ENCODE measurements at regions of chr14 and their contacts with region 1.

Region 1: DNA sequence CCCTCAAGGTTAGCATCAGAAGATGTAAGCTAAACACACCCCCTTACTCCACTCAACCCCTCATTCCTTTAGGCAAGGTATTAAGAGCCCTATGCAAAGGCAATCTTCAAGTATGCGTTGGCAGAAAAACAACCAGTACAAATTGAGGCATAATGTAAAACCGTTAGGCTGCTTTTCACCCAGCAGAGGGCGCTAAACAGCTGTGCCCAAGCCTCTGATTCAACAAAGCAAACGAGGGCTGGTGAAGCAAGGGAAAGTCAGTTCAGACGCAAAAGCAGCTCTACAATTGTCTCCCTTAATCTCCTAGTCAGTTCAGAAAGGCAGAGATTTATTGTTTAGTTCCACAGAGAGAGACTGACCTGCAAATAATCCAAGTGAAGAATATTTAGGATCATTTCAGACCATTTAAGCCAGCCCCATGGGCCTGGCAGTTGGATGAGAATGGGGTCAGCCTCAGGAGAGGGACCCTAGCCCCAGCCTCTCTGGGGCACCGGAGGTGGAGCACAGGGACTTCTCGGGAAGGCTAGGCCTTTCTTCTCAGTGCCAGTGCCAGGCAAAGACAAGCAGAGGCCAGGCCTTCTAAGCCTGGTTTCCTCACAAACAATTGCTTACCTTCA is 23.5 kb downstream of the DCAF5 start:
- DNase-seq: peak; percentile 28 to 82 (median 72)
- ATAC-seq: peak; percentile 95
- H3K4me3 ChIP-seq: no peak overlapping the region
- H3K4me3 Mint-ChIP-seq: peak overlapping the region in 8 of 10 donors; percentile 2 to 37 (median 23)
- H3K27ac ChIP-seq: peak overlapping the region; percentile 27
- H3K27ac Mint-ChIP-seq: peak overlapping the region in 8 of 9 donors; percentile 44 to 91 (median 82)
- H3K4me1 ChIP-seq: peaks cover 16 to 33% of the 10 kb centered on the region in 2 donors
- H3K4me1 Mint-ChIP-seq: peaks cover 36 to 94% (median 90%) of the 10 kb centered on the region in 7 donors
- H3K27me3 ChIP-seq: no peaks in the 10 kb centered on the region
- H3K27me3 Mint-ChIP-seq: no peaks in the 10 kb centered on the region

Region 2: DNA sequence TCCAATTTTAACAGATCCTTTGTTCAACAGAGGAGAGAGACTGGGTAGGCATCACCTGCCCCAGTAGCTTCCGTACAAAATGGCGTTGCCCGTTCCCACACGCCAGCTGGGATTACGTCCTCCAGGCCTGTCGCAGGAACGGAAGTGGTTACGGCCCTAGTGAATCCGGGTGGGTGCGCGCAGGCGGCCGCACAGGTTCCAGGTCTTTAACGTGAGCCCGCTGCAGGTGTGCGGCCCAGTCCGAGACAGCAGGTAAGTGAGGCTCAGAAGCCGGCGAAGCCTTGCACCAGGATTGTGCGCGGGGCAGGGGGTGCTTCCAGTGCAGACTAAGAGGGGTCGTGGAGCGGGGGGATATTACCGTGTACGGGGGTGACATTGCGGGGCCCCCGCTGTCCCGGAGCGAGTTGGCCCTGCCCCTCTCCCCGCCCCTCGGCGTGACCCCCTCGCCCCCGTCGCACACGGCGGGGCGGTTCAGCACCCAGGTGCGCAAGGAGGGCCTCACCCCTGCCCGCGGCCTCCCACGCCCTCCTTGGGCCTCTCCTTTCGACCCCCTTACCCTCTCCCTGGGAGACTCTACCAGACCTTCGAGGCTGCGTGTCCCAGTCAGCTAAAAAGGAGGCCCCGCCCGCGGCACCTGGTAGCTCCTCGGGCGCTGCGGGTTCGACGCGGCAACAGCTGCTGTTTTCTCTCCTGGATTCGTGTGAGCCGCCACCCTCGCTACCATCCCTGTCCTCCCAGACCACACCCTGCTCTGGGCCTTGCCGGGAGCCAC is 62.2 kb after region 1 on chr14 and contains the start of gene EXD2:
- CTCF ChIA-PET with region 1: interaction called, 4 read pairs
- POLR2A ChIA-PET with region 1: interaction called, 5 read pairs
- intact Hi-C with region 1: loop called (anchors 1 to 2 kb)
- DNase-seq: peak; percentile 27 to 68 (median 61)
- ATAC-seq: peak; percentile 81
- H3K4me3 ChIP-seq: peak within 1 kb of the TSS; percentile 71
- H3K4me3 Mint-ChIP-seq: peak within 1 kb of the TSS; percentile 91 to 97 (median 94)
- H3K27ac ChIP-seq: peak within 1 kb of the TSS; percentile 70
- H3K27ac Mint-ChIP-seq: peak within 1 kb of the TSS; percentile 80 to 96 (median 92)
- H3K4me1 ChIP-seq: peaks cover 0 to 6% of the 10 kb centered on the region in 2 donors
- H3K4me1 Mint-ChIP-seq: peaks cover 16 to 44% (median 38%) of the 10 kb centered on the region in 7 donors
- H3K27me3 ChIP-seq: no peaks in the 10 kb centered on the region
- H3K27me3 Mint-ChIP-seq: peaks cover 0 to 14% (median 0%) of the 10 kb centered on the region in 5 donors
- total RNA-seq, gene EXD2: 4.8 to 17.2 (median 10.6) TPM

Region 3: GRCh38 chr14:69214393-69214792 is 85.0 kb after region 1 on chr14:
- CTCF ChIA-PET with region 1: interaction called, 4 read pairs
- POLR2A ChIA-PET with region 1: no interaction called
- intact Hi-C with region 1: loop called in 1 of 2 experiments (anchors 2 kb)
- DNase-seq: no peak
- ATAC-seq: no peak
- H3K4me3 ChIP-seq: no peak overlapping the region
- H3K4me3 Mint-ChIP-seq: no peak overlapping the region
- H3K27ac ChIP-seq: no peak overlapping the region
- H3K27ac Mint-ChIP-seq: no peak overlapping the region
- H3K4me1 ChIP-seq: no peaks in the 10 kb centered on the region
- H3K4me1 Mint-ChIP-seq: peaks cover 0 to 4% (median 0%) of the 10 kb centered on the region in 7 donors
- H3K27me3 ChIP-seq: no peaks in the 10 kb centered on the region
- H3K27me3 Mint-ChIP-seq: no peaks in the 10 kb centered on the region

Region 4: GRCh38 chr14:69242311-69243224 is 113.2 kb after region 1 on chr14:
- CTCF ChIA-PET with region 1: interaction called, 20 read pairs
- POLR2A ChIA-PET with region 1: no interaction called
- intact Hi-C with region 1: loop called (anchors 1 to 5 kb)
- DNase-seq: peak in 7 of 9 donors; percentile 23 to 61 (median 49)
- ATAC-seq: peak; percentile 78
- H3K4me3 ChIP-seq: no peak overlapping the region
- H3K4me3 Mint-ChIP-seq: no peak overlapping the region
- H3K27ac ChIP-seq: no peak overlapping the region
- H3K27ac Mint-ChIP-seq: peak overlapping the region in 1 of 9 donors; percentile 59
- H3K4me1 ChIP-seq: no peaks in the 10 kb centered on the region
- H3K4me1 Mint-ChIP-seq: peaks cover 0 to 4% (median 0%) of the 10 kb centered on the region in 7 donors
- H3K27me3 ChIP-seq: no peaks in the 10 kb centered on the region
- H3K27me3 Mint-ChIP-seq: no peaks in the 10 kb centered on the region

Region 5: GRCh38 chr14:69346710-69347109 is 217.3 kb after region 1 on chr14:
- CTCF ChIA-PET with region 1: no interaction called
- POLR2A ChIA-PET with region 1: no interaction called
- intact Hi-C with region 1: loop called in 1 of 2 experiments (anchors 2 kb)
- DNase-seq: no peak
- ATAC-seq: peak; percentile 20
- H3K4me3 ChIP-seq: no peak overlapping the region
- H3K4me3 Mint-ChIP-seq: no peak overlapping the region
- H3K27ac ChIP-seq: no peak overlapping the region
- H3K27ac Mint-ChIP-seq: no peak overlapping the region
- H3K4me1 ChIP-seq: no peaks in the 10 kb centered on the region
- H3K4me1 Mint-ChIP-seq: peaks cover 0 to 2% (median 0%) of the 10 kb centered on the region in 7 donors
- H3K27me3 ChIP-seq: no peaks in the 10 kb centered on the region
- H3K27me3 Mint-ChIP-seq: peaks cover 0 to 24% (median 4%) of the 10 kb centered on the region in 5 donors

Region 6: GRCh38 chr14:69460093-69460701 is 330.8 kb after region 1 on chr14:
- CTCF ChIA-PET with region 1: interaction called, 4 read pairs
- POLR2A ChIA-PET with region 1: no interaction called
- intact Hi-C with region 1: loop called (anchors 1 to 5 kb)
- DNase-seq: peak in 8 of 9 donors; percentile 29 to 51 (median 38)
- ATAC-seq: peak; percentile 94
- H3K4me3 ChIP-seq: no peak overlapping the region
- H3K4me3 Mint-ChIP-seq: no peak overlapping the region
- H3K27ac ChIP-seq: no peak overlapping the region
- H3K27ac Mint-ChIP-seq: peak overlapping the region in 1 of 9 donors; percentile 11
- H3K4me1 ChIP-seq: no peaks in the 10 kb centered on the region
- H3K4me1 Mint-ChIP-seq: no peaks in the 10 kb centered on the region
- H3K27me3 ChIP-seq: no peaks in the 10 kb centered on the region
- H3K27me3 Mint-ChIP-seq: no peaks in the 10 kb centered on the region

Region 7: DNA sequence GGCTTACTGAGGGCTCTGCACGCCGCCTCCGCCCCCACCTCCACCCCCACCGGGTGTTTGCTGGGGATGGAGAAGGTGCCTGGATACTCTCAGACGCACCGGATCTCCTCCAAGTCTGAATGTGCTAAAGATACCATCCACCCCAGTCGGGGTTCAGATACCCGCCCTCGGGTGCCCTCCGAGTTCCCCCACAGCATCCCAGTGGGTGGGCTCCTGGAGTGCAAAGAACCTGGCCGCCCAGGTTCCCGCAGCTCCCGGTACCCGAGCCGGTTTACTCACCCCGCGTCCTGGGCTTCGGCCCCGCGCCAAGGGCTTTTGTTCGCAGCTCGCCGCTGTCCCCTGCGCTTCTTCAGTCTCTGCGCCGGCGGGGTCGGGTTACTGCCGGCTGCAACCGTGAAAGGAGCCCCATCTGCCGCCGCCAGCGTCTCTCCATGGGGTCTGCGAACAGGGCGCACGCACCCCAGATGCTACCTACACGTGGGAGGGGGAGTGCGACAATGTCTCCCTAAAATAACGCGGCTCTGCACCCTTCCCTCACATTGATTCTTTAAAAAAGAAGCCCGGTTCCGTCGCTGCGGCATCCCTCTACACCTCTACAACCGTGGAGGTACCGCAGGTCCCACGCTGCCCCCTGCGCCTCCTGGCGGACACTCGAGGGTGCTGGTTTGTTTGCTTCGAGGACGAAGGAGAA is 445.0 kb after region 1 on chr14 and contains the start of gene CCDC177:
- CTCF ChIA-PET with region 1: no interaction called
- POLR2A ChIA-PET with region 1: no interaction called
- intact Hi-C with region 1: loop called in 1 of 2 experiments (anchors 1 kb)
- DNase-seq: peak; percentile 42 to 73 (median 66)
- ATAC-seq: peak; percentile 92
- H3K4me3 ChIP-seq: peak within 1 kb of the TSS; percentile 59
- H3K4me3 Mint-ChIP-seq: peak within 1 kb of the TSS; percentile 83 to 96 (median 87)
- H3K27ac ChIP-seq: no peak within 1 kb of the TSS
- H3K27ac Mint-ChIP-seq: peak within 1 kb of the TSS in 2 of 9 donors; percentile 32 to 36
- H3K4me1 ChIP-seq: peaks cover 9 to 16% of the 10 kb centered on the region in 2 donors
- H3K4me1 Mint-ChIP-seq: peaks cover 5 to 15% (median 12%) of the 10 kb centered on the region in 7 donors
- H3K27me3 ChIP-seq: peaks cover 0 to 6% of the 10 kb centered on the region in 2 donors
- H3K27me3 Mint-ChIP-seq: peaks cover 47 to 82% (median 48%) of the 10 kb centered on the region in 5 donors
- total RNA-seq, gene CCDC177: not detected

Measured in naive thymus-derived CD4-positive, alpha-beta T cell (primary cell).